ENCODE measurements at regions of chr19 and their contacts with region 1.

Region 1: GRCh38 chr19:40529093-40529954 is 47.3 kb upstream of the SHKBP1 start:
- DNase-seq: peak; percentile 88 to 91 (median 88)
- ATAC-seq: peak; percentile 85 to 97 (median 93)
- H3K4me3 ChIP-seq: peak overlapping the region; percentile 49 to 54 (median 53)
- H3K27ac ChIP-seq: no peak overlapping the region
- H3K4me1 ChIP-seq: no peaks in the 10 kb centered on the region
- H3K27me3 ChIP-seq: no peaks in the 10 kb centered on the region
- CTCF ChIP-seq: peak; percentile 93 to 97 (median 96)
- POLR2A ChIP-seq: no peak

Region 2: GRCh38 chr19:40472516-40472915 is 56.8 kb before region 1 on chr19:
- intact Hi-C with region 1: loop called in 1 of 2 experiments (anchors 10 kb)
- DNase-seq: no peak
- ATAC-seq: no peak
- H3K4me3 ChIP-seq: no peak overlapping the region
- H3K27ac ChIP-seq: no peak overlapping the region
- H3K4me1 ChIP-seq: no peaks in the 10 kb centered on the region
- H3K27me3 ChIP-seq: no peaks in the 10 kb centered on the region
- CTCF ChIP-seq: no peak
- POLR2A ChIP-seq: no peak

Measured in right lobe of liver (tissue), 6 donors.